Activated naive CD4-positive, alpha-beta T cell treated with anti-CD3 and anti-CD28 coated beads for 36 hours (primary cell): ENCODE measurements at regions of chr20 and their contacts with region 1.

Region 1: DNA sequence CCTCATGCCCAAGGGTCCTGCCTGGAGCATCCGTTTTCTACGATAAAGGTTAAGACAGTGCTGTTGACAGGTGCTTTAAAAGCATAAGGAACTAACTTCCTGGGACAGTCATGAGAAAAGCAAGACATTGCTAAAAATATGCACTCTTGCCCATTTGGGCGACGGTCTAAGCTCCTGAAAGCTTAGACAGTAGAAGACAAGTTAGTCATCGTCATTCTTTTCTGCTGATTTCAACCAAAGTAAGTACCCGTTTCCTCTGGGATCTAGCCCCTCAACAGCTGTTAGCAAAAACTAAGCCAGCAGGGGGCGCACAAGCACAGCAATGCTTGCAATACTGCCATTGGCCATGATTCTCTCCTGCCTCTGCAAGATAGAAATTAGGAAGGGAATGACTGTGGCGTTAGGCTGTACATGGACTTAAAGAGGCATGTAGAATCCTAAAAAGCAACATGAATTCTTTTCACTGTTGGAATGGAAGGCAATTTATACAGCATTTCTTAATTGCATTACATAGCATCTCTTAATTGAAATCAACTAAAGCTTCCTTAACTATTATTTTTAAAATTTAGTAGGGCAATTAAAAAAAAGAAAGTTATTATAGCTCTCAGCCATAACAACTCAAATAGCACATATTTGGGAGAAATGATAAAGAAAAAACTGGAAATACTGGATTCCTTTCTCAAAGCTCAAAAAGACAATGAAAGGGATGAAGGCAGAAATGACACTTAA is 147.8 kb upstream of the RALGAPA2 start:
- DNase-seq: peak; percentile 95
- H3K4me3 Mint-ChIP-seq: no peak overlapping the region
- H3K27ac Mint-ChIP-seq: no peak overlapping the region
- H3K4me1 Mint-ChIP-seq: no peaks in the 10 kb centered on the region
- H3K27me3 Mint-ChIP-seq: peaks cover 20% of the 10 kb centered on the region

Region 2: DNA sequence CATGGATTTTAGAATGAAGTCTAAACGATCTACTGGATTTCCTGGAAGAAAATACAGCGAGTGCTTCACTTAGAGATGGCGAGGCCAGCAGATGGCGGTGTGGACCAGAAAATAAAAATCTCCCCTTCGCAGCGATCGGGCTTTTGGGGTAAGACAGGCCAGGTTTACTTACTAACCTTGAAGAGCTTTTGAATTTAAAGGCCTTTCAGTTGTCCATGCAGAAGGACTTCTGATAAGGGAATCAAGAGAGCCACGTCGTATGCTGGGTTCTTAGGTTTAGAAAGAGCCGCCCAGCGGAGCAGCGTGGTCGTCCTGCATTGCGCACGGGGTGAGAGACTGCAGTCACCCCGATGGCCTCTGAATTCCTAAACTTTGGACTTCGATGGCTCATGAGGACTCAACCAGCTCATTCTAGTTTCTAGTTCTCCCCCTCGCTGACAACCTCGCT is 22.6 kb before region 1 on chr20:
- CTCF ChIA-PET with region 1: interaction called, 31 read pairs
- intact Hi-C with region 1: no loop called
- DNase-seq: peak; percentile 67
- H3K4me3 Mint-ChIP-seq: no peak overlapping the region
- H3K27ac Mint-ChIP-seq: no peak overlapping the region
- H3K4me1 Mint-ChIP-seq: peaks cover 3% of the 10 kb centered on the region
- H3K27me3 Mint-ChIP-seq: peaks cover 7% of the 10 kb centered on the region

Region 3: GRCh38 chr20:20875716-20876115 is 15.5 kb after region 1 on chr20:
- CTCF ChIA-PET with region 1: interaction called, 15 read pairs
- intact Hi-C with region 1: no loop called
- DNase-seq: no peak
- H3K4me3 Mint-ChIP-seq: no peak overlapping the region
- H3K27ac Mint-ChIP-seq: no peak overlapping the region
- H3K4me1 Mint-ChIP-seq: no peaks in the 10 kb centered on the region
- H3K27me3 Mint-ChIP-seq: peaks cover 15% of the 10 kb centered on the region

Region 4: GRCh38 chr20:21048841-21049273 is 188.6 kb after region 1 on chr20:
- CTCF ChIA-PET with region 1: interaction called, 10 read pairs
- intact Hi-C with region 1: loop called (anchors 10 kb)
- DNase-seq: peak; percentile 56
- H3K4me3 Mint-ChIP-seq: no peak overlapping the region
- H3K27ac Mint-ChIP-seq: no peak overlapping the region
- H3K4me1 Mint-ChIP-seq: no peaks in the 10 kb centered on the region
- H3K27me3 Mint-ChIP-seq: peaks cover 23% of the 10 kb centered on the region

Region 5: DNA sequence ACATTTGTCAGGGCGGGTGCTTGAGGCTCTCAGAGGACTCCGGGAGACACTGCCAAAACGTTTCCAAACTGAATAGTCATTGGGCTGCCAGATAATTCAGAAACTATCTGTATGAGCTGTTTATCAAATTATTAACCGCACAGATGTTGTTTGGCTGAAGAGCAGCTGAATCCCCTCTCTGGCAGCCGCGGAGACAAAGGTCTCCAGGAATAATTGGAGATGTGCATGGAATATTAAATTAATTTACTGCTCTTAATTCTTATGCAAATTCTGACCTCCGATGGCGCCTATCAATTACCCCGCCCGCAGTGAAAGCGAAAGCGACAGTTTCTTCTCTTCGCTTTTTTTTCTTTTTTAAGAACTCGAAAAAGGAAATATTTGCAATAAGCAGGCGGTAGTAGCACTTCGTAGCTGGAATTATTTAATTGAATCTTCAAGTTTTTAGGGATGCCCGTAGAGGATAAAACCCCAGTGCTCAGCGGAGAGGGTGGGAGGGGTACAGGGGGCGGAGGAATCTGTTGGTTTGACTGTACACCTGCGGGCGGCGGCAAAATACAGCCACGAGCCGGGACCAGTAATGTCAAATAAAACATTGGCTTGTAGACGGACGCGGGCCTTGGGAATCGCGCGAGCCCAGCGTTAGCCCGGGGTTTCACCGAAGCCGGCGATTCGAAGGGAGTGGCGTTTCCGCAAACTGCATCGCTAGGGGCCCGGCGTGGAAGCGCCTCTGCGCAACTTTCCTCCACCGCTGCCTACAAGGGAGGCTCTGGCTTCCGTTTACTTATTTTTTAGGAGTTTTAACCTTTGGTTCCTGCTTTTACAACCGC is 239.7 kb after region 1 on chr20:
- CTCF ChIA-PET with region 1: no interaction called
- intact Hi-C with region 1: loop called (anchors 5 kb)
- DNase-seq: peak; percentile 65
- H3K4me3 Mint-ChIP-seq: peak overlapping the region; percentile 78
- H3K27ac Mint-ChIP-seq: no peak overlapping the region
- H3K4me1 Mint-ChIP-seq: peaks cover 32% of the 10 kb centered on the region
- H3K27me3 Mint-ChIP-seq: peaks cover 75% of the 10 kb centered on the region

Region 6: GRCh38 chr20:21571841-21572690 is 711.8 kb after region 1 on chr20:
- CTCF ChIA-PET with region 1: interaction called, 5 read pairs
- intact Hi-C with region 1: loop called (anchors 5 kb)
- DNase-seq: peak; percentile 26
- H3K4me3 Mint-ChIP-seq: no peak overlapping the region
- H3K27ac Mint-ChIP-seq: no peak overlapping the region
- H3K4me1 Mint-ChIP-seq: peaks cover 7% of the 10 kb centered on the region
- H3K27me3 Mint-ChIP-seq: peaks cover 7% of the 10 kb centered on the region

Region 7: GRCh38 chr20:21615617-21616080 is 755.4 kb after region 1 on chr20:
- CTCF ChIA-PET with region 1: interaction called, 13 read pairs
- intact Hi-C with region 1: loop called (anchors 10 kb)
- DNase-seq: peak; percentile 73
- H3K4me3 Mint-ChIP-seq: no peak overlapping the region
- H3K27ac Mint-ChIP-seq: no peak overlapping the region
- H3K4me1 Mint-ChIP-seq: no peaks in the 10 kb centered on the region
- H3K27me3 Mint-ChIP-seq: peaks cover 42% of the 10 kb centered on the region